ENCODE measurements at regions of chr10 and their contacts with region 1.

Region 1: DNA sequence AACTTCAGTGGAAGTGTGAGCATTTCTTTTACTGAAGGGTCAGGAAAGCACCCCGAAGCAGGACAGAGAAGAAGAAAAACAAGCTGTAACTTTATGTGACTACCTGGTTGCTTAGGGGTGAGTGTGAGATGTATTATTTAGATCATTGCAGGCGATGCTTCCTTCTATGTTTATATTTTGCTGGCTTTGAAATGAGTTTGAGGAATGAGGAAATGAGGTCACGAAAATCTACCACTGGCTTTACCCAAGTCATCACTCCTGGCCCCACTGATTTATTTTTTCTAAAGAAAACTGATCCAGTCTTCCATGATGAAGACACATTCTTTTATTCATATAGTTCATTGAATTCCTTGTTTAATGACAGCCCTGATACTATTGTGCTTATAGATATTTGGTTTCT is 716.6 kb upstream of the FZD8 start:
- DNase-seq: no peak
- H3K4me3 ChIP-seq: no peak overlapping the region
- H3K27ac ChIP-seq: no peak overlapping the region
- H3K4me1 ChIP-seq: no peaks in the 10 kb centered on the region
- H3K27me3 ChIP-seq: no peaks in the 10 kb centered on the region
- CTCF ChIP-seq: no peak
- POLR2A ChIP-seq: no peak

Region 2: DNA sequence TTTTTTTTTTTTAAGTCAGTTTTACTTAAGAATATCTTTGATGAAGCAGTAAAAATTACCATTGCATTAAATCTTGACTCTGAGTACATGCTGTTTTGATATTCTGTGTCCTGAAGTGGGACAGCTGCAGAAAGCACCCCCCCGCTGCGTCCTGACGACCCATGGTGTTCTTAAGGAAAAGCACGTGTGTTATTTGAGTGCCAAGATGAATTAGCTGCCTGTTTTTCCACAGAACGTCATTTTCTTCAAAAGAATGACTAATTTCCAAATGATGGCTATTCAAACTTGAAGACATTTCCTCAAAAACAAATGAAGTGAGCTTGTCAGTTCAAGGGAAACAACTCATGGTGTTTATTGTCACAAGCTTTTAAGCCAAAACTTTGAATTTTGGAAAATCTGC is 1186.2 kb before region 1 on chr10:
- intact Hi-C with region 1: no loop called
- DNase-seq: no peak
- H3K4me3 ChIP-seq: no peak overlapping the region
- H3K27ac ChIP-seq: no peak overlapping the region
- H3K4me1 ChIP-seq: no peaks in the 10 kb centered on the region
- H3K27me3 ChIP-seq: no peaks in the 10 kb centered on the region
- CTCF ChIP-seq: no peak
- POLR2A ChIP-seq: no peak

Region 3: GRCh38 chr10:35182629-35183510 is 1175.9 kb before region 1 on chr10:
- intact Hi-C with region 1: no loop called
- DNase-seq: no peak
- H3K4me3 ChIP-seq: no peak overlapping the region
- H3K27ac ChIP-seq: no peak overlapping the region
- H3K4me1 ChIP-seq: no peaks in the 10 kb centered on the region
- H3K27me3 ChIP-seq: no peaks in the 10 kb centered on the region
- CTCF ChIP-seq: no peak
- POLR2A ChIP-seq: no peak

Region 4: GRCh38 chr10:35495521-35496119 is 863.1 kb before region 1 on chr10:
- intact Hi-C with region 1: loop called (anchors 5 kb)
- DNase-seq: peak in 1 of 2 donors; percentile 80
- H3K4me3 ChIP-seq: no peak overlapping the region
- H3K27ac ChIP-seq: peak overlapping the region; percentile 57 to 59
- H3K4me1 ChIP-seq: peaks cover 0 to 11% of the 10 kb centered on the region in 2 donors
- H3K27me3 ChIP-seq: no peaks in the 10 kb centered on the region
- CTCF ChIP-seq: no peak
- POLR2A ChIP-seq: no peak